Activated CD8-positive, alpha-beta memory T cell treated with anti-CD3 and anti-CD28 coated beads, Interleukin-2, amount 10 ng/mL, durations not matched to agents 7 days and 5 days (primary cell): ENCODE measurements at regions of chr12 and their contacts with region 1.

Region 1: DNA sequence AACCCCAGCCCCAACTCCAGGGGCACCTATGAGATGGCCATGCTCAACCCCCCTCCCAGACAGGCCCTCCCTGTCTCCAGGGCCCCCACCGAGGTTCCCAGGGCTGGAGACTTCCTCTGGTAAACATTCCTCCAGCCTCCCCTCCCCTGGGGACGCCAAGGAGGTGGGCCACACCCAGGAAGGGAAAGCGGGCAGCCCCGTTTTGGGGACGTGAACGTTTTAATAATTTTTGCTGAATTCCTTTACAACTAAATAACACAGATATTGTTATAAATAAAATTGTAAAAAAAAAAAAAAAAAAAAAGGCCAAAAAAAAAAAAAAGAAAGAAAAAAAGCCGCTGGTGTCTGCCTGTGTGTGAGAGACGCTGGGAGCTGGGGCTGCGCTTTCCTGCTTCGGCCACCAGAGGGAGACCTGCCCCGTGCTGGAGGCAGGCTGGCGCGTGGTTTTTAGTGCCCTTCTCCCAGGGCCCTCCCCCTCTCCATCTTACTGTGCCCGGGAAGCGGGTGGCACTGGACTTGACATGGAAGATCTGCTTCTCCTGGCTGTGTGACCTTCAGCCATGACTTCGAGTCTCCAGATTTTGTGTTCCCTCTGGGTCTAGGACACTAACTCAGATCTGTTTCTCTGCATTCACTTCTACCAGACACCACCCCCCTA is 3.4 kb upstream of the NXPH4 start:
- DNase-seq: peak; percentile 89
- ATAC-seq: peak; percentile 57
- H3K4me3 Mint-ChIP-seq: no peak overlapping the region
- H3K27ac Mint-ChIP-seq: no peak overlapping the region
- H3K4me1 Mint-ChIP-seq: peaks cover 30% of the 10 kb centered on the region
- H3K27me3 Mint-ChIP-seq: peaks cover 41% of the 10 kb centered on the region

Region 2: DNA sequence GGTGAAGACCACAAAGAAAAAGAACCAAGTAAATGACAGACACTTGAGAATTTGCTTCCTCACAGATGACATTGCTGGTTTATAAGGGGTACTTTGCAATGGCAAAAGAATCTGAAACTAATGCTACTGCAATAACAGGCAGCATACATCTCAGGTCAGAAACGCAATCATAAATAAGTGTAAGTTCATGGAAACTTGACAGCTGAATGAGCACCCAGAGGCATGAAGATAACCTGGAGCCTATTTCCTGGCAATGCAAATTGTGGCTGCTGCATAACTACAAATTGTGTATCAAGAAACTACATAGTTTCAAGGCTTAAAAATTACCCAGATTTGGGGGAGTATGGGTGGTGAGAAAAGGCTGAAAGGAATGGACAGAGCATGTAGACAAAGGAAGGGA is 154.7 kb before region 1 on chr12:
- CTCF ChIA-PET with region 1: no interaction called
- DNase-seq: no peak
- ATAC-seq: no peak
- H3K4me3 Mint-ChIP-seq: no peak overlapping the region
- H3K27ac Mint-ChIP-seq: no peak overlapping the region
- H3K4me1 Mint-ChIP-seq: peaks cover 10% of the 10 kb centered on the region
- H3K27me3 Mint-ChIP-seq: no peaks in the 10 kb centered on the region

Region 3: GRCh38 chr12:57195611-57196371 is 17.4 kb before region 1 on chr12:
- CTCF ChIA-PET with region 1: interaction called, 17 read pairs
- DNase-seq: no peak
- ATAC-seq: no peak
- H3K4me3 Mint-ChIP-seq: no peak overlapping the region
- H3K27ac Mint-ChIP-seq: no peak overlapping the region
- H3K4me1 Mint-ChIP-seq: no peaks in the 10 kb centered on the region
- H3K27me3 Mint-ChIP-seq: no peaks in the 10 kb centered on the region

Region 4: GRCh38 chr12:57229634-57230380 is 16.6 kb after region 1 on chr12 and contains the start of gene SHMT2:
- CTCF ChIA-PET with region 1: interaction called, 647 read pairs
- DNase-seq: peak; percentile 96
- ATAC-seq: peak; percentile 79
- H3K4me3 Mint-ChIP-seq: peak within 1 kb of the TSS; percentile 95
- H3K27ac Mint-ChIP-seq: peak within 1 kb of the TSS; percentile 94
- H3K4me1 Mint-ChIP-seq: peaks cover 52% of the 10 kb centered on the region
- H3K27me3 Mint-ChIP-seq: peaks cover 24% of the 10 kb centered on the region
- total RNA-seq, gene SHMT2: 194 to 357 TPM

Region 5: GRCh38 chr12:57254506-57255280 is 41.5 kb after region 1 on chr12:
- CTCF ChIA-PET with region 1: interaction called, 647 read pairs
- DNase-seq: no peak
- ATAC-seq: no peak
- H3K4me3 Mint-ChIP-seq: no peak overlapping the region
- H3K27ac Mint-ChIP-seq: no peak overlapping the region
- H3K4me1 Mint-ChIP-seq: no peaks in the 10 kb centered on the region
- H3K27me3 Mint-ChIP-seq: no peaks in the 10 kb centered on the region

Region 6: DNA sequence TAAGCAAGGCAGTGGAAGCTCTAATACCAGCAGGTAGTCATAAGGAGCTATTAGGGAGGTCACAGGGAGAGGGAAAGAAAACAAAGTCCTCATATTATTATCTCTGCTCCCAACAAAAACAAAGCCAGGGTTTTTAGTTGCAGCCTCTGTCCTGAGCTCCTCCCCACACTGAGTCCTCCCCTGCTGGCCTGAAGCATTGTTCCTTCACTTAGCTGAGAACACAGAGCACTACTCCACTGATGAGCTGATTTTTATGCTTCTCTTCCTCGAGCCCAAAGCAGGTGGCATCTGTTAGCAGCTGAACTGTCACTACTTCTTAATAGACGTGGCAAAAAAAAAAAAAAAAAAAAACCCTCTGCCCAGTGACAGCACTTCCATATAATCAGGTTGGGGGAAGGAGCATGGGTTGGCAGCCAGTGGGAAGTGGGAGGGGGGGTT is 48.3 kb after region 1 on chr12:
- CTCF ChIA-PET with region 1: interaction called, 16 read pairs
- DNase-seq: no peak
- ATAC-seq: no peak
- H3K4me3 Mint-ChIP-seq: no peak overlapping the region
- H3K27ac Mint-ChIP-seq: no peak overlapping the region
- H3K4me1 Mint-ChIP-seq: peaks cover 8% of the 10 kb centered on the region
- H3K27me3 Mint-ChIP-seq: no peaks in the 10 kb centered on the region